Activated T-helper 1 cell treated with anti-CD3 and anti-CD28 coated beads, Interleukin-12 subunit alpha, Interleukin-12 subunit beta, Interleukin-2, Interleukin-4 antibody, amounts not matched to agents 30 ng/mL and 10 ng/mL and 1 ng/mL, durations not matched to agents 14 hours and 24 hours and 36 hours (primary cell): ENCODE measurements at regions of chr10 and their contacts with region 1.

Region 1: GRCh38 chr10:8404391-8405120 is 350.1 kb downstream of the GATA3 start:
- DNase-seq: peak; percentile 68
- H3K4me3 Mint-ChIP-seq: peak overlapping the region; percentile 57
- H3K27ac Mint-ChIP-seq: peak overlapping the region; percentile 89
- H3K4me1 Mint-ChIP-seq: peaks cover 68% of the 10 kb centered on the region
- H3K27me3 Mint-ChIP-seq: peaks cover 10% of the 10 kb centered on the region

Region 2: GRCh38 chr10:8059959-8060703 is 344.4 kb before region 1 on chr10:
- intact Hi-C with region 1: loop called (anchors 1 kb)
- DNase-seq: peak; percentile 73
- H3K4me3 Mint-ChIP-seq: peak overlapping the region; percentile 98
- H3K27ac Mint-ChIP-seq: peak overlapping the region; percentile 96
- H3K4me1 Mint-ChIP-seq: peaks cover 74% of the 10 kb centered on the region
- H3K27me3 Mint-ChIP-seq: peaks cover 1% of the 10 kb centered on the region

Region 3: DNA sequence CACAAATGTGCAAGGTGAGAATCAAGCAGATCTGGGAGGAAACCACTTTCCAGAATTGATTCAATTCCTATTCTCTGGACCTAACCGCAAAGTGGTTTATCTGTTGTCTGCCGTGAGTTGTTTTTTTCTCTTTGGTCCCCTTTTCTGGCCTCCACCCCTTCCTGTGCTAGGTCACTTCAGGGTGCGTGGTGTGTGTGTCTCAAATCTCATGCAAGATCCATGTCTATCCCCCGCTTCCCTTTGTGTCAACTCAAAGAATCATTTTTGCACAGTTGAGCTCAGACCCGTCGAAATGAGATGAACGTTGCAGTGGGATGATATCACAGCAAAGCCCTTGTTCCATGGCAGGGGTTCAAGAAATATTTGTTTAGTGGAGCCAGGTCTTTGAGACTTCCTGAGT is 165.6 kb before region 1 on chr10:
- intact Hi-C with region 1: loop called (anchors 1 kb)
- DNase-seq: peak; percentile 37
- H3K4me3 Mint-ChIP-seq: peak overlapping the region; percentile 41
- H3K27ac Mint-ChIP-seq: peak overlapping the region; percentile 75
- H3K4me1 Mint-ChIP-seq: peaks cover 66% of the 10 kb centered on the region
- H3K27me3 Mint-ChIP-seq: no peaks in the 10 kb centered on the region

Region 4: DNA sequence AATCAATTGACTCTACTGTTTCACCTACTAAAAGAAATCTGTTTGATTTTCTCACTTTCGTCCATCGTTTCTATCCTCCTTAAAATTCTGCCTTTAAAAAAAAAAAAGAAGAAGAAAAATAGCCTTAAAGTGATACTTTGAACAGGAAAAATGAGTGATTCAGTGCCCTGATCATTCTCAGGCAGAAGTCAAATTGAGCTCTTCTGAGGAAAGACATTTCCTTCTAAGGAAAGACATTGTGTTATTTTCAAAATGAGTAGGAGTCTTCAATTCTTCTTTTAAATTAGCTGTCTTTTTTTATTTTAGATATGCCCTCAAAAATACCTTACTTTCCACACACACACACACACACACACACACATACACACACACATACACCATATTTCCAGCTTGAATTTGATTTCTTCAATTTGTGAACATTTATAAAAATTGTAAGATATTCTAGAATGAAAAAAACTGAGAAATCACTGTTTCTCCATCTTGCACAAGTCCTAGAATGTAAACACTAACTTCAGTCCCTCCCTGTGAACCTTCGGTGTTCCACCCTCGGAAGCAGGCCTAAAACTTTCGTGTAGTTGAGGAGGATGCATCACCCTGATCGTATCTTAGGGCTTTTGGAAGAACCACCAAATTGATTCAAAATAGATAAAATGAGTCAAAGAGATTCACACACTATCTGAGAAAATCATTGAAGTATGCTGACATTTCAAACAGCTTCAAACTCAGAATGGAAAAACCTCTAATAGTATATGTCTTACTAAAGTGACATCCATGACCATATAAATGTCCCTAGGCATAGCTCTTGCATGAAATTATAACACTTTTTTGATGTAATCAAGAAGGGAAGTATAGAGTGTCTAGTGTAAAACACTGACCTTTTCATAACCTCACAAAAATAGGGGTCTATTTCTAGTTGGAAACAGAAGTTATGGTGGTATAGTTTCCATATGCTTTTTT is 79.3 kb before region 1 on chr10:
- intact Hi-C with region 1: loop called (anchors 1 kb)
- DNase-seq: no peak
- H3K4me3 Mint-ChIP-seq: peak overlapping the region; percentile 63
- H3K27ac Mint-ChIP-seq: peak overlapping the region; percentile 85
- H3K4me1 Mint-ChIP-seq: peaks cover 57% of the 10 kb centered on the region
- H3K27me3 Mint-ChIP-seq: peaks cover 15% of the 10 kb centered on the region

Region 5: DNA sequence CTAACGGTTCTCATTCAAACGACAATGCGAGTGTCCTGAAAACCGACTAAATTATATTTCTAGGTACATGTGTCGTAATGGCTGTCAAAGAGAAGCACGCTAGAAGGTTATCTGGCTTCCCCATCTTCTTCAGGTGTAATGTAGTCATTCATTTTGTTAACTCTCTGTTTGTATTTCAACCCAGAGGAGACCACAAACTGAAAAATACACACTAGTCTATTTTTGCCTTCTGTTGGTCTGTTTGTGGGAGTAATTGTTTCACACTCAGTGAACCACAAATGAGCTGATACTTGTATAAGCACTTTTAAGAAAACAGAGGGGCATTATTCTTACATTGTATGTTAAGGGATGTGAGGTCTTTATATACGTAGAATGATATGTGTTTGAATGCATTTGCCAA is 44.2 kb before region 1 on chr10:
- intact Hi-C with region 1: loop called (anchors 1 kb)
- DNase-seq: no peak
- H3K4me3 Mint-ChIP-seq: peak overlapping the region; percentile 32
- H3K27ac Mint-ChIP-seq: peak overlapping the region; percentile 78
- H3K4me1 Mint-ChIP-seq: peaks cover 56% of the 10 kb centered on the region
- H3K27me3 Mint-ChIP-seq: peaks cover 9% of the 10 kb centered on the region

Region 6: GRCh38 chr10:9091530-9092093 is 687.1 kb after region 1 on chr10:
- intact Hi-C with region 1: loop called (anchors 5 kb)
- DNase-seq: no peak
- H3K4me3 Mint-ChIP-seq: no peak overlapping the region
- H3K27ac Mint-ChIP-seq: no peak overlapping the region
- H3K4me1 Mint-ChIP-seq: peaks cover 11% of the 10 kb centered on the region
- H3K27me3 Mint-ChIP-seq: peaks cover 4% of the 10 kb centered on the region